ENCODE measurements at regions of chr7 and their contacts with region 1.

Region 1: GRCh38 chr7:97731736-97732564 is at the start of gene TAC1:
- DNase-seq: no peak
- H3K4me3 Mint-ChIP-seq: peak within 1 kb of the TSS; percentile 63
- H3K27ac Mint-ChIP-seq: no peak within 1 kb of the TSS
- H3K4me1 Mint-ChIP-seq: no peaks in the 10 kb centered on the region
- H3K27me3 Mint-ChIP-seq: peaks cover 18% of the 10 kb centered on the region
- CTCF ChIP-seq: no peak
- total RNA-seq, gene TAC1: 0.80 and 2.8 TPM in 2 replicates

Region 2: GRCh38 chr7:97601941-97602457 is 130.0 kb before region 1 on chr7:
- CTCF ChIA-PET with region 1: no interaction called
- intact Hi-C with region 1: loop called (anchors 10 kb)
- DNase-seq: no peak
- H3K4me3 Mint-ChIP-seq: no peak overlapping the region
- H3K27ac Mint-ChIP-seq: peak overlapping the region; percentile 75
- H3K4me1 Mint-ChIP-seq: peaks cover 18% of the 10 kb centered on the region
- H3K27me3 Mint-ChIP-seq: no peaks in the 10 kb centered on the region
- CTCF ChIP-seq: no peak

Region 3: GRCh38 chr7:97671571-97671970 is 60.4 kb before region 1 on chr7:
- CTCF ChIA-PET with region 1: no interaction called
- intact Hi-C with region 1: no loop called
- DNase-seq: no peak
- H3K4me3 Mint-ChIP-seq: no peak overlapping the region
- H3K27ac Mint-ChIP-seq: no peak overlapping the region
- H3K4me1 Mint-ChIP-seq: no peaks in the 10 kb centered on the region
- H3K27me3 Mint-ChIP-seq: peaks cover 43% of the 10 kb centered on the region
- CTCF ChIP-seq: no peak

Region 4: DNA sequence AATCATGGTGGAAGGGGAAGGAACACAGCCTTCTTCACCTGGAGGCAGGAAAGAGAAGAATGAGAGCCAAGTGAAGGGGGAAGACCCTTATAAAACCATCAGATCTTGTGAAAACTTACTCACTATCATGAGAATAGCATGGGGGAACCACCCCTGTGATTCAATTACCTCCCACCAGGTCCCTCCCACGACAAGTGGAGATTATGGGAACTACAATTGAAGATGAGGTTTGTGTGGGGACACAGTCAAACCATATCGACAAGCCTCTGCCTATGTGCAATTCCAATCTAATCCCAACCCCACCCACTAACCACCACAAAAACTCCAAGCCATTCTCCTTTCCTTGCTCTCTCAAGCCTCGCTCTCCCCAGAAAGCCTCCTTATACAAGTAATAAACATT is 69.2 kb after region 1 on chr7:
- CTCF ChIA-PET with region 1: no interaction called
- intact Hi-C with region 1: no loop called
- DNase-seq: no peak
- H3K4me3 Mint-ChIP-seq: no peak overlapping the region
- H3K27ac Mint-ChIP-seq: no peak overlapping the region
- H3K4me1 Mint-ChIP-seq: peaks cover 9% of the 10 kb centered on the region
- H3K27me3 Mint-ChIP-seq: peaks cover 9% of the 10 kb centered on the region
- CTCF ChIP-seq: no peak

Region 5: DNA sequence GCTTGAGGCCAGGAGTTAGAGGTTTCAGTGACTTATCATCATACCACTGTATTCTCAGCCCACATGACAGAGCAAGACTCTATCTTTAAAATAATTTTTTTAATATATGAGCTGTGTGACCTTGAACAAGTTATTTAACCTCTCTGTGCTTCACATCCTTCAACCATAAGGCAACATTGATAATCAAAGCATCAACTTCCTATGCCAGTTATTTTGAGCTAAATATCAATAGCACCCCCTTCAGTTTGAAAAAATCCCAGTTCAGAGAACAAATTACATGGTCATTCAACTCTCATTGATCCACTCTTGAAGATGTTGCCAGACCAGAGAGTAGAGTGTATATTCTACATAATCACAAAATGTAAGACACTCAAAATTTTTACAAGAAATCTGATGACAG is 87.2 kb after region 1 on chr7:
- CTCF ChIA-PET with region 1: no interaction called
- intact Hi-C with region 1: loop called (anchors 5 kb)
- DNase-seq: no peak
- H3K4me3 Mint-ChIP-seq: no peak overlapping the region
- H3K27ac Mint-ChIP-seq: no peak overlapping the region
- H3K4me1 Mint-ChIP-seq: no peaks in the 10 kb centered on the region
- H3K27me3 Mint-ChIP-seq: no peaks in the 10 kb centered on the region
- CTCF ChIP-seq: no peak